Left cardiac atrium (tissue), 4 donors: ENCODE measurements at regions of chr6 and their contacts with region 1.

Region 1: DNA sequence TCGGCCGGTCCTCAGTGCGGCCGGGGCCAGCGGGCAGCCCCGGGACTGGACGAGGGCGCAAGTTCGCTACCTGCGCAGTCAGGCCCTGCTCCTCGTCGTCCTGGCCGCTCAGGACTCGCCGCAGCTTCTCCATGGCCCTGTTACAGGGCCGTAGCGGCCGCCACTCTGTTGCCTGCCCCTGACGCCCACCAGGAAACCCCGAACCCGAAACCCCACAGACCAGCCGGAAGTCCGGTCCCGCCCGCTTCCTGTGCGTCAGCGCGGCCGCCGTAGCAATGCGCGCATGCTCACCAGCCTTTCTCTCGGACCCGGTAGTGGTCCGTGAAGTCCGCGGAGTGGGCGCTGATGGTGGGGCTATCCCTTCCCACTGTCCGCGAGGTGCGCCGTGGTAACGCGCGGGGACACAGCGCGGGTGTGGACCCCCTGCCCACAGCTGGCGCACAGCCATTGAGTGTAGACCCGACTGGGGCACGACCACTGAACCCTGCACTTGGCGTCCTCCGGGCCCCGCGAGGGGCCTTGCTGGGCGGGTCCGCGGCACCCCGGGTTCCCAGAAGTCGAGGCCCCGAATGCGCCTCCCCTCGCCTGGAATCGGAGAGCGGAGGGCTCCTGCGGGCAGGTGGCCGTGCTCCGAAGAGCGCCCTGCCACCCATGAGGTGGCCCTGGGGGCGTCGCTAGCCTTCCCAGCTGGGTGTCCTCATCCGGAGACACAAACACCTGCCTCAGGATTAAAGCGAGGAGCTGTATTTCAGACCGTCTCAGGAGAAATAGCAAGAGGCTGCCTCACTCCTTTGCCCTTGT is at the start of gene SFT2D1:
- DNase-seq: peak; percentile 93
- ATAC-seq: peak; percentile 98 to 99
- total RNA-seq, gene SFT2D1: 26.3 to 28.0 TPM

Region 2: GRCh38 chr6:166221040-166221439 is 121.5 kb before region 1 on chr6:
- intact Hi-C with region 1: no loop called
- DNase-seq: no peak
- ATAC-seq: no peak

Region 3: DNA sequence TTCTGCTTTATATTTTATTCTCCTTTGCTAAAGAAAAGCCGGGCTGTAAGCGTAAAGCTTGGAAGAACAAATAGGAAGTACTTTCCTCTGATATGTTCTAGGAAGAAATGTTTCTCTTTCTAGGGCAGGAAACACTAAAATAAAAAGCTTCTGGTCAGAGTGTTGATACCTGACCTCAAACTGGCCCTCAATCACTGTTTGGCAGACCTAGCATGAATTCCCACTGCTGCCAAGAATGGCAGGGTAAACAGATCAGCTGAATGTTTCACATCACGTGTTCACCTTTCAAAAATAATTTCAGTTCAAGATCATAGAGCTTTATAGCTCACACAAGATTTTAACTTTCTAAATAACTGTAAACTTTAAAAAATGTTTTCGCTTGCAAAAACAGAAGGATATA is 37.3 kb after region 1 on chr6:
- intact Hi-C with region 1: loop called in 1 of 2 experiments (anchors 5 kb)
- DNase-seq: no peak
- ATAC-seq: no peak